ENCODE measurements at regions of chr13 and their contacts with region 1.

Region 1: GRCh38 chr13:25114220-25114619 is 18.3 kb downstream of the PABPC3 start:
- ATAC-seq: peak; percentile 92 to 99 (median 97)
- H3K4me3 ChIP-seq: no peak overlapping the region
- H3K27ac ChIP-seq: no peak overlapping the region
- H3K4me1 ChIP-seq: no peaks in the 10 kb centered on the region

Region 2: GRCh38 chr13:24727731-24728601 is 386.3 kb before region 1 on chr13:
- in situ Hi-C with region 1: no loop called
- ATAC-seq: peak; percentile 43 to 100 (median 78)
- H3K4me3 ChIP-seq: no peak overlapping the region
- H3K27ac ChIP-seq: no peak overlapping the region
- H3K4me1 ChIP-seq: no peaks in the 10 kb centered on the region

Region 3: GRCh38 chr13:25018729-25019115 is 95.5 kb before region 1 on chr13:
- in situ Hi-C with region 1: loop called in 2 of 9 experiments (anchors 10 to 25 kb)
- ATAC-seq: no peak
- H3K4me3 ChIP-seq: peak overlapping the region in 4 of 5 donors; percentile 28 to 39 (median 36)
- H3K27ac ChIP-seq: no peak overlapping the region
- H3K4me1 ChIP-seq: no peaks in the 10 kb centered on the region